Natural killer cell (primary cell): ENCODE measurements at regions of chr2 and their contacts with region 1.

Region 1: GRCh38 chr2:195533771-195534642 is 123.0 kb upstream of the SLC39A10 start:
- DNase-seq: peak; percentile 21 to 61
- ATAC-seq: peak; percentile 34 to 50 (median 39)
- H3K4me3 ChIP-seq: no peak overlapping the region
- H3K4me3 Mint-ChIP-seq: peak overlapping the region; percentile 89
- H3K27ac ChIP-seq: peak overlapping the region; percentile 55
- H3K27ac Mint-ChIP-seq: peak overlapping the region; percentile 63 to 91
- H3K4me1 ChIP-seq: peaks cover 41% of the 10 kb centered on the region
- H3K4me1 Mint-ChIP-seq: peaks cover 80 to 88% of the 10 kb centered on the region in 2 donors
- H3K27me3 ChIP-seq: no peaks in the 10 kb centered on the region
- H3K27me3 Mint-ChIP-seq: peaks cover 7 to 19% of the 10 kb centered on the region in 2 donors
- CTCF ChIP-seq: no peak

Region 2: GRCh38 chr2:195477248-195477995 is 56.6 kb before region 1 on chr2:
- intact Hi-C with region 1: no loop called
- DNase-seq: no peak
- ATAC-seq: no peak
- H3K4me3 ChIP-seq: no peak overlapping the region
- H3K4me3 Mint-ChIP-seq: no peak overlapping the region
- H3K27ac ChIP-seq: no peak overlapping the region
- H3K27ac Mint-ChIP-seq: no peak overlapping the region
- H3K4me1 ChIP-seq: no peaks in the 10 kb centered on the region
- H3K4me1 Mint-ChIP-seq: peaks cover 6% of the 10 kb centered on the region in 2 donors
- H3K27me3 ChIP-seq: no peaks in the 10 kb centered on the region
- H3K27me3 Mint-ChIP-seq: peaks cover 9 to 25% of the 10 kb centered on the region in 2 donors
- CTCF ChIP-seq: no peak

Region 3: GRCh38 chr2:195498176-195498575 is 35.8 kb before region 1 on chr2:
- intact Hi-C with region 1: loop called (anchors 2 kb)
- DNase-seq: peak; percentile 34 to 78
- ATAC-seq: peak in 2 of 3 donors; percentile 69 to 70
- H3K4me3 ChIP-seq: no peak overlapping the region
- H3K4me3 Mint-ChIP-seq: no peak overlapping the region
- H3K27ac ChIP-seq: no peak overlapping the region
- H3K27ac Mint-ChIP-seq: no peak overlapping the region
- H3K4me1 ChIP-seq: peaks cover 2% of the 10 kb centered on the region
- H3K4me1 Mint-ChIP-seq: peaks cover 11 to 13% of the 10 kb centered on the region in 2 donors
- H3K27me3 ChIP-seq: no peaks in the 10 kb centered on the region
- H3K27me3 Mint-ChIP-seq: peaks cover 8 to 9% of the 10 kb centered on the region in 2 donors
- CTCF ChIP-seq: peak; percentile 48

Region 4: GRCh38 chr2:195559431-195559914 is 25.5 kb after region 1 on chr2:
- intact Hi-C with region 1: loop called (anchors 2 kb)
- DNase-seq: peak; percentile 36 to 92
- ATAC-seq: peak; percentile 84 to 93 (median 84)
- H3K4me3 ChIP-seq: no peak overlapping the region
- H3K4me3 Mint-ChIP-seq: peak overlapping the region; percentile 85
- H3K27ac ChIP-seq: peak overlapping the region; percentile 55
- H3K27ac Mint-ChIP-seq: peak overlapping the region; percentile 73 to 80
- H3K4me1 ChIP-seq: peaks cover 51% of the 10 kb centered on the region
- H3K4me1 Mint-ChIP-seq: peaks cover 43% of the 10 kb centered on the region in 2 donors
- H3K27me3 ChIP-seq: no peaks in the 10 kb centered on the region
- H3K27me3 Mint-ChIP-seq: no peaks in the 10 kb centered on the region
- CTCF ChIP-seq: no peak

Region 5: DNA sequence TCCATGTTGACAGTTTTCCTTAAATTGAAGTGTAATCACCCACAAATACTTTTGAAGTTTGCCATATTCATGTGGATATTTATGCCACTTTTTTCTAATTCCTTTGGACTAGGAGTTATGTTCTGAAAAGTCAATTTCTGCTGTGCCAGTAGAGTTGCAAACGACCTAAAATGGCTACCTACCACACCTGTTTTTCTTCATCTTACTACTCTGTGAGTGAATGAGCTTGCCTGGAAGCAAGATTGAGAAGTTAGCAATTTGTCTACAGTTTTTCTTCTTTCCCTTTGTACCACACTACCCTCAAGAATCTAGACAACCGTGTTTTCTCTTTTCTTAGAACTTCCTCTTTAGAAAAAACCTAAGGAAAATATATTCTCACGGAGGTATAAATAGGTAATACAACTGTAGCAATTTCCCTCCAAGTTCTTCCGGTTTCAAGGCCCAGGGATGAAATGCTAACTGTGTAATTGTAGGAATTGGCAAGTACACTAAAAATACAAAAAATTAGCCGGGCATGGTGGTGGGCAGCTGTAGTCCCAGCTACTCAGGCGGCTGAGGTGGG is 115.7 kb after region 1 on chr2:
- intact Hi-C with region 1: loop called (anchors 1 kb)
- DNase-seq: no peak
- ATAC-seq: peak in 1 of 3 donors; percentile 1
- H3K4me3 ChIP-seq: peak overlapping the region; percentile 0
- H3K4me3 Mint-ChIP-seq: peak overlapping the region; percentile 80
- H3K27ac ChIP-seq: peak overlapping the region; percentile 83
- H3K27ac Mint-ChIP-seq: peak overlapping the region; percentile 82 to 92
- H3K4me1 ChIP-seq: peaks cover 29% of the 10 kb centered on the region
- H3K4me1 Mint-ChIP-seq: peaks cover 29 to 36% of the 10 kb centered on the region in 2 donors
- H3K27me3 ChIP-seq: no peaks in the 10 kb centered on the region
- H3K27me3 Mint-ChIP-seq: no peaks in the 10 kb centered on the region
- CTCF ChIP-seq: no peak

Region 6: GRCh38 chr2:196068271-196069209 is 534.5 kb after region 1 on chr2 and contains the start of gene DNAH7:
- intact Hi-C with region 1: loop called (anchors 10 kb)
- DNase-seq: peak; percentile 87 to 95
- ATAC-seq: peak; percentile 87 to 96 (median 92)
- H3K4me3 ChIP-seq: peak within 1 kb of the TSS; percentile 50
- H3K4me3 Mint-ChIP-seq: peak within 1 kb of the TSS; percentile 89
- H3K27ac ChIP-seq: peak within 1 kb of the TSS; percentile 61
- H3K27ac Mint-ChIP-seq: peak within 1 kb of the TSS; percentile 70 to 87
- H3K4me1 ChIP-seq: peaks cover 12% of the 10 kb centered on the region
- H3K4me1 Mint-ChIP-seq: peaks cover 11 to 16% of the 10 kb centered on the region in 2 donors
- H3K27me3 ChIP-seq: no peaks in the 10 kb centered on the region
- H3K27me3 Mint-ChIP-seq: no peaks in the 10 kb centered on the region
- CTCF ChIP-seq: peak; percentile 76
- total RNA-seq, gene DNAH7: 0.07 to 0.20 TPM in 2 of 3 donors, not detected in the other

Region 7: DNA sequence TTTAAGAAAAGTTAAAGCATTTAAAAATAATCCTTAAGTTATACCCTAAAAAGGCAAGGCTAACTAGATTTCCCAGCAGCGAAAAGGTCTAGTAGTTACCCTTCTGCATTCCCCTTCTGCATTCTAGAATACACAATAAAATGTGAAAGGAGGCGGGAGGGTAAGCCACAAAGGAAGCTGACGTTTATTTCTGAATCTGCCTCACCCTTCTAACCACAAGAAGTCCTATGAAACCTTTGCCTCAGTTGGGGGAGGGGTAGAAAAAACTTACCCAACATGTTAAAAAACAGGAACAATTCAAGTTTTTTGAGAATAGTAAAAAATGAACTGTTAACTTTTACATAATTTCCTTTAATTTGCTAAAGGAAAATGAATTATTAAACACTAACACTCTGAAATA is 626.1 kb after region 1 on chr2:
- intact Hi-C with region 1: loop called (anchors 10 kb)
- DNase-seq: peak in 1 of 2 donors; percentile 92
- ATAC-seq: peak; percentile 69 to 84 (median 73)
- H3K4me3 ChIP-seq: peak overlapping the region; percentile 17
- H3K4me3 Mint-ChIP-seq: peak overlapping the region; percentile 75
- H3K27ac ChIP-seq: peak overlapping the region; percentile 88
- H3K27ac Mint-ChIP-seq: peak overlapping the region; percentile 86 to 95
- H3K4me1 ChIP-seq: peaks cover 35% of the 10 kb centered on the region
- H3K4me1 Mint-ChIP-seq: peaks cover 56 to 57% of the 10 kb centered on the region in 2 donors
- H3K27me3 ChIP-seq: no peaks in the 10 kb centered on the region
- H3K27me3 Mint-ChIP-seq: no peaks in the 10 kb centered on the region
- CTCF ChIP-seq: no peak